Gastrocnemius medialis (tissue), 4 donors: ENCODE measurements at regions of chrX and their contacts with region 1.

Region 1: GRCh38 chrX:109840585-109840984 is 107.5 kb upstream of the ACSL4 start:
- DNase-seq: peak in 1 of 2 donors; percentile 18
- ATAC-seq: peak; percentile 52 to 83
- H3K4me3 ChIP-seq: no peak overlapping the region
- H3K27ac ChIP-seq: no peak overlapping the region
- H3K4me1 ChIP-seq: no peaks in the 10 kb centered on the region
- H3K27me3 ChIP-seq: peaks cover 0 to 5% (median 0%) of the 10 kb centered on the region in 3 donors
- CTCF ChIP-seq: no peak
- POLR2A ChIP-seq: no peak

Region 2: GRCh38 chrX:109536439-109537336 is 303.9 kb before region 1 on chrX and contains the start of gene NXT2:
- in situ Hi-C with region 1: no loop called
- intact Hi-C with region 1: loop called (anchors 5 kb)
- DNase-seq: peak; percentile 79 to 89
- ATAC-seq: peak; percentile 97 to 98
- H3K4me3 ChIP-seq: peak within 1 kb of the TSS; percentile 62 to 71 (median 64)
- H3K27ac ChIP-seq: peak within 1 kb of the TSS; percentile 81 to 95 (median 88)
- H3K4me1 ChIP-seq: no peaks in the 10 kb centered on the region
- H3K27me3 ChIP-seq: peaks cover 0 to 9% (median 5%) of the 10 kb centered on the region in 3 donors
- CTCF ChIP-seq: no peak
- POLR2A ChIP-seq: peak; percentile 67 to 75
- total RNA-seq, gene NXT2: 1.8 to 5.3 (median 3.3) TPM

Region 3: DNA sequence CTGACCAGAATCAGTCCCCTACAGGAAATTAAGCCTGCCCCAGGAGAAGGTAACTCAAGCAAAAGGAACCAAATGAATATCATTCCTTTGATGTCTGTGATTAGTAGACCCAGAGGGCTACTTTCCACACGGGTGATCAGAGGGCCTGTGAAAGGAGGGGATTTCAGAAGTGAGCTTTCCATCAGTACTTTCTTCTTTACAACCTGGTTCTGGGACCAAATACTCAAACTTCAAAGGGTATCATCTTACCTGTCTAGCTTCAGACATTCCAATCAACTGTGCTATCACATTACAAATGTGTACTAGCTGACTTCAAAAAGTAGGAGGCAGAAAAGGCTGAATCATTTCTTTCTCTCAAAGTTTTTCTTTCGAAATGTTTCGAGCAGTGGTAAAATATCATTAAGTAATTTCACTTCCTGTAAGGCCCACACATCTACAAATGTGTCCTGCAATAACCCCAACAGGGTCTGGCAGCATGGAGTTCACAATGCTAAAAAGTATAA is 131.4 kb before region 1 on chrX:
- in situ Hi-C with region 1: no loop called
- intact Hi-C with region 1: no loop called
- DNase-seq: no peak
- ATAC-seq: peak in 1 of 2 donors; percentile 23
- H3K4me3 ChIP-seq: no peak overlapping the region
- H3K27ac ChIP-seq: peak overlapping the region; percentile 8 to 48 (median 28)
- H3K4me1 ChIP-seq: peaks cover 9 to 10% of the 10 kb centered on the region in 2 donors
- H3K27me3 ChIP-seq: peaks cover 0 to 4% (median 0%) of the 10 kb centered on the region in 3 donors
- CTCF ChIP-seq: no peak
- POLR2A ChIP-seq: no peak